ENCODE measurements at regions of chr15 and their contacts with region 1.

Region 1: GRCh38 chr15:73873889-73874511 is 636 bp downstream of the TBC1D21 start:
- DNase-seq: peak; percentile 66
- ATAC-seq: no peak
- H3K4me3 Mint-ChIP-seq: no peak overlapping the region
- H3K27ac Mint-ChIP-seq: no peak overlapping the region
- H3K4me1 Mint-ChIP-seq: peaks cover 2% of the 10 kb centered on the region
- H3K27me3 Mint-ChIP-seq: peaks cover 28% of the 10 kb centered on the region

Region 2: DNA sequence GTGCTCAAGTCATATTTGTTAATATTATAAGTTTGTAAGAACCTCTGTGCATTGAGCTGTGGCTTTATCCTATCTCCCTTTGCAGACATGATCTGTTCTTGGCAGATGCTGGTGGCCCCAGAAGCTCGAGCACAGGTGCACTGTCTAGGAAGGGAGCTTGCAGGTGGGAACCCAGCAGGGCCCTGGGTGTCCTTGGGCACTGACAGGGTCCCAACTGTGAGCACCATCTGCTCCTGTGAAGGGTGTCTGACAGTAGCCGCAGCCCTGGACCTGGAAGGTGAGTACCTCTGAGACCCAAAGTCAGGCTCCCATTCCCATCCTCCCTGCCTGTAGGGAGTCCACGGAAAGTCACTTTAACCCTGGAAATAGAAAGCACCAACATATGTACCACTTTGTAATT is 433.4 kb before region 1 on chr15:
- CTCF ChIA-PET with region 1: no interaction called
- POLR2A ChIA-PET with region 1: no interaction called
- DNase-seq: no peak
- ATAC-seq: no peak
- H3K4me3 Mint-ChIP-seq: no peak overlapping the region
- H3K27ac Mint-ChIP-seq: no peak overlapping the region
- H3K4me1 Mint-ChIP-seq: peaks cover 12% of the 10 kb centered on the region
- H3K27me3 Mint-ChIP-seq: peaks cover 23% of the 10 kb centered on the region

Region 3: GRCh38 chr15:73812806-73813465 is 61.1 kb before region 1 on chr15:
- CTCF ChIA-PET with region 1: no interaction called
- POLR2A ChIA-PET with region 1: no interaction called
- DNase-seq: no peak
- ATAC-seq: no peak
- H3K4me3 Mint-ChIP-seq: no peak overlapping the region
- H3K27ac Mint-ChIP-seq: no peak overlapping the region
- H3K4me1 Mint-ChIP-seq: no peaks in the 10 kb centered on the region
- H3K27me3 Mint-ChIP-seq: no peaks in the 10 kb centered on the region

Region 4: GRCh38 chr15:73897441-73898261 is 23.7 kb after region 1 on chr15:
- CTCF ChIA-PET with region 1: interaction called, 41 read pairs
- POLR2A ChIA-PET with region 1: no interaction called
- DNase-seq: peak; percentile 84
- ATAC-seq: peak; percentile 92
- H3K4me3 Mint-ChIP-seq: no peak overlapping the region
- H3K27ac Mint-ChIP-seq: no peak overlapping the region
- H3K4me1 Mint-ChIP-seq: peaks cover 9% of the 10 kb centered on the region
- H3K27me3 Mint-ChIP-seq: peaks cover 7% of the 10 kb centered on the region

Region 5: DNA sequence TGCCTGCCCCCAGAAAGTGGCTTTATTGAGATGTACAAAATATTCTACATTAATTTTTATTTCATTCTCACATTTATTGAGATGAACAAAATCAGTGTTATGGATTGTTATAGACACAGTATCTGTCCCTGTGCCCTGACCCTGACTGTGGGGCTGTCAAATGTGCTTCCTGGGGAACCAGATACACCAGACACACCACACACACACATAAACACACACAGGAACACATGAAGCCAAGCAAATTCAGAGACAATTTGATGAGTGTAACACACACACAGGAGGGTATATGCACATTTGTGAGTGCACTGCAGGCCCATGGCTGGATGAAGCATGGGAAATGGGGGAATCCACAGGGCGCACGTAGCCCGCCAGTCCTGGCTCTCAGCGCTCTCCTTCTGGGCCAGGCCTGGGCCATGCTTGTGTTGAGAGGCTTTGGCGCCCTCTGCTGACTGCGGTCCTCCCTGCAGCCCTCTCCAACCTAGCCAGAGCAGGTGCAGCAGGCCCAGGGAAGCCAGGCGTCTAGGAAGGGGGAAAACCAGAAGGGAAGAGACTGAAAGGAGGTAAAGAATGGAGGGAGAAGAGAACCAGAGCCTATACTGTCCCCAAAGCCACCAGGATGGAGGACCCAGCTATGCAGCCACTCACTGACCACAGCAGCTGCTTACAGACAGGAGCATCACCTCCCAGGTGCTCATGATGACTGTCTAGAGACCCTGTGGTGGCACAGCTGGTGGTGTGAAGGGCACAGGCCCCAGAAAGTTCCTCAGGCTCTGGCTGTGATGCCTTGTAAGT is 34.2 kb after region 1 on chr15:
- CTCF ChIA-PET with region 1: interaction called, 115 read pairs
- POLR2A ChIA-PET with region 1: no interaction called
- DNase-seq: peak; percentile 87
- ATAC-seq: peak; percentile 99
- H3K4me3 Mint-ChIP-seq: no peak overlapping the region
- H3K27ac Mint-ChIP-seq: peak overlapping the region; percentile 37
- H3K4me1 Mint-ChIP-seq: peaks cover 27% of the 10 kb centered on the region
- H3K27me3 Mint-ChIP-seq: no peaks in the 10 kb centered on the region

Region 6: GRCh38 chr15:73914145-73914544 is 40.1 kb after region 1 on chr15:
- CTCF ChIA-PET with region 1: interaction called, 115 read pairs
- POLR2A ChIA-PET with region 1: no interaction called
- DNase-seq: peak; percentile 53
- ATAC-seq: peak; percentile 79
- H3K4me3 Mint-ChIP-seq: peak overlapping the region; percentile 52
- H3K27ac Mint-ChIP-seq: peak overlapping the region; percentile 88
- H3K4me1 Mint-ChIP-seq: peaks cover 34% of the 10 kb centered on the region
- H3K27me3 Mint-ChIP-seq: no peaks in the 10 kb centered on the region

Region 7: DNA sequence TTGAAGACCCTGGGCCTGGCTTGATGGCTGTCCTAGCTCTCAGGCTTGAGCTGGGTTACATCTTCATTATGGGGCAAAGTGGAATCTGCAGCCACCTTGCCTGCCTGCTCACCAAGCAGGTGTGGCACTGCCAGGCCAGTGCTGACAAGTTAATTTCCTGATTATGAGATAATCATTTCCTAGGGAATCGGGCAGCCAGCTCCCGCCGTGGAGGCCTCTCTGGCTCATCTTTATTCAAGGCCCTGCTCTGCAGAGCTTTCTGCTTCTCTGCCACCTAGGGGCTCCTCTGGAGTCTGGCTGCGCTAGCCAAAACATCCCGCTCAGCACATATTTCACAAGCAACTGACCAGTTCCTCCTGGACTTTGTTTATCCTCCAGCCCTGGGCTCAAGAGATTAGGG is 62.2 kb after region 1 on chr15:
- CTCF ChIA-PET with region 1: interaction called, 11 read pairs
- POLR2A ChIA-PET with region 1: no interaction called
- DNase-seq: no peak
- ATAC-seq: no peak
- H3K4me3 Mint-ChIP-seq: no peak overlapping the region
- H3K27ac Mint-ChIP-seq: no peak overlapping the region
- H3K4me1 Mint-ChIP-seq: peaks cover 11% of the 10 kb centered on the region
- H3K27me3 Mint-ChIP-seq: no peaks in the 10 kb centered on the region